ENCODE measurements at regions of chr3 and their contacts with region 1.

Region 1: GRCh38 chr3:132432639-132433038 is 15.3 kb downstream of the DNAJC13 start:
- DNase-seq: peak; percentile 93
- ATAC-seq: peak; percentile 92
- H3K4me3 ChIP-seq: no peak overlapping the region
- H3K27ac ChIP-seq: peak overlapping the region; percentile 43; the same call in 1 of the 2 replicates
- H3K4me1 ChIP-seq: peaks cover 4% of the 10 kb centered on the region
- H3K27me3 ChIP-seq: no peaks in the 10 kb centered on the region
- CTCF ChIP-seq: no peak
- POLR2A ChIP-seq: no peak
- RAD21 ChIP-seq: no peak

Region 2: DNA sequence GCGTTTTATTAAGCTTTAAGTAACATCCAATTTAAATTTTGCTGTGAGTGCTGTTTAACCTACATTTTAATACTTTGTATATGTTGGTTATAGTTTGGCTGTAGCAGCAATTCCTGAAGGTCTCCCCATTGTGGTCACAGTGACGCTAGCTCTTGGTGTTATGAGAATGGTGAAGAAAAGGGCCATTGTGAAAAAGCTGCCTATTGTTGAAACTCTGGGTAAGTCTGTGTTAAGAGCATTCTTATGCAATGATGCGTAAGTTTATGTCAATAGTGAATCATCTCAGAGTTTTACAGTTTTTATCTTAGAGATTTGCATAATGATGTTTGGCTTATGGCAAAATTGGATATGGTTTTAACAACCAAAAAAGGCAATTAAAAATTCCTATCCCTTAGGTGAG is 1468.8 kb before region 1 on chr3:
- CTCF ChIA-PET with region 1: no interaction called
- POLR2A ChIA-PET with region 1: no interaction called
- dilution Hi-C with region 1: no loop called
- in situ Hi-C with region 1: loop called (anchors 25 kb)
- intact Hi-C with region 1: no loop called
- DNase-seq: peak; percentile 98
- ATAC-seq: peak; percentile 84
- H3K4me3 ChIP-seq: no peak overlapping the region
- H3K27ac ChIP-seq: peak overlapping the region; percentile 64; the same call in 1 of the 2 replicates
- H3K4me1 ChIP-seq: peaks cover 5% of the 10 kb centered on the region
- H3K27me3 ChIP-seq: no peaks in the 10 kb centered on the region
- CTCF ChIP-seq: no peak
- POLR2A ChIP-seq: no peak
- RAD21 ChIP-seq: no peak

Region 3: DNA sequence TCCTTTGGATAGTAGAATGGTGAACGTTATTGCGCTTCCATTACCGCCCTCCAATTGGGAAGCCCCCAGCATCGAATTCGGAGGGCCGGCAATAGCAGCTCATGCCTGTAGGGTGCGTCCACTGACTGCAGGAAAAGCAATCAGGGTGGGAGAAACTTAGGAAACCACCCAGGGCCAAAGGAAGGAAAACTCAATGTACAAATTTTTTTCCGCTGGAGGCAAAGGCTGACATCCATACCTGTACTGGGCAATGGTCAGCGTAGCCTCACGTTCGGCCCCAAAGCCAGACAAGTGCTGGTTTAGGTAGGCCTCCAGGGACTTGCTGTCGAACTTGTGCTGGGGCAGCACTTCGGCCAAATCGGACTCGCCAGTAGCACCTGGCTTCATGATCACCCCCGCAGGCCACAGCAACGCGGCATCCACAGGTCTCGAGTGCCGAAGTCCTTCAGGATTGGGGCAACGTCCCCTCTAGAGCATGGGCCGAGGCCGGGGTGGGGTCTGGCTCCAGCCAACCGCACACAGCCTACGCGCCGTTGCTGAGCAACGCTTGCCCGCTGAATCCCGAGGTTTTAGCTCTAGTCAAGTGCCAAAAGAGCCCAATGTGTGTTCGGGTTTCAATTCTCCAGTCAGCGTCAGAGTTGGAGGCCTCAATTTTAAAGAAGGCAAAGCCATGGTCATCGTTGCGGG is 226.9 kb after region 1 on chr3 and contains the start of gene ACAD11:
- CTCF ChIA-PET with region 1: no interaction called
- POLR2A ChIA-PET with region 1: no interaction called
- dilution Hi-C with region 1: no loop called
- in situ Hi-C with region 1: no loop called
- intact Hi-C with region 1: no loop called
- DNase-seq: peak; percentile 68
- ATAC-seq: peak; percentile 80
- H3K4me3 ChIP-seq: peak within 1 kb of the TSS; percentile 84
- H3K27ac ChIP-seq: peak within 1 kb of the TSS; percentile 92
- H3K4me1 ChIP-seq: peaks cover under 1% of the 10 kb centered on the region; the same call in 1 of the 2 replicates
- H3K27me3 ChIP-seq: no peaks in the 10 kb centered on the region
- CTCF ChIP-seq: peak; percentile 58
- POLR2A ChIP-seq: no peak
- RAD21 ChIP-seq: peak; percentile 39
- total RNA-seq, gene ACAD11: 18.8 and 27.8 TPM in 2 replicates

Region 4: DNA sequence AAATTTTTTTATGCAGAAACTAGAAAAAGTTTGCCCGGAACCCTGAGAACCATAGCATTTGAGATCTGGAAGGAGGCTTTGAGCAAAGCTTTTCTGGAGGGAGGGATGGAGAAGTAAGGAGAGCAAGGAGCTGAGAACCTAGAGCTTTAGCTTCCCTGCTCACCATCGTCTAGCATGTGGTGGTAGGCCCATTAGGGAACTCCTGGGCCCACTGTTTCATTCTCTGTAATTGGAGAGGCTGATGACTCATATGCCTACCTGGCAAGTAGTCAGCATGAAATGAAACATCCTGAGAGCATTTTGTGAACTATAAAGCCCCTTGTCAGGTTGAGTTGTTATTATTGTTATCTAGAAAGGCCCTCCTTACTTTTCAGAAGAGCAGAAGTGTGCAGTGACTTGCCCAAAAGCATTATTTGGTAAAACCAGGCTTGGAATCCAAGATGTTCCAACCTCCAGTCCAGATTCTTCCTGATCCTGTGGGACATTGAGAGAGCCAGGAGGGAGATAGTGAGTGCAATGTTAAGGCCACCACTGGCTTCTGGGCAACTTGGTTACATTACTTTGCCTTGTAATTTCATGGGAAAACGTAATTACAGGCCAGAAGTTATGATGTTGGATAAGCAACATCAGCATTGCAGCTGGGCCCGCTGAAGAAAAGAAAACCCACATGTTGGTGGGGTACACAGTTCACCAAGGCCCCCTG is 862.7 kb after region 1 on chr3:
- CTCF ChIA-PET with region 1: no interaction called
- POLR2A ChIA-PET with region 1: no interaction called
- dilution Hi-C with region 1: no loop called
- in situ Hi-C with region 1: loop called (anchors 25 kb)
- intact Hi-C with region 1: no loop called
- DNase-seq: peak; percentile 81
- ATAC-seq: peak; percentile 42
- H3K4me3 ChIP-seq: no peak overlapping the region
- H3K27ac ChIP-seq: peak overlapping the region; percentile 10
- H3K4me1 ChIP-seq: peaks cover 13% of the 10 kb centered on the region
- H3K27me3 ChIP-seq: no peaks in the 10 kb centered on the region
- CTCF ChIP-seq: no peak
- POLR2A ChIP-seq: no peak
- RAD21 ChIP-seq: no peak

Measured in IMR-90 (cell line).